Activated T-helper 2 cell treated with anti-CD3 and anti-CD28 coated beads, Interferon-gamma antibody, Interleukin-2, Interleukin-4, amounts not matched to agents 10 μg/mL and 5 μg/mL and 100 μg/mL, durations not matched to agents 14 hours and 24 hours and 36 hours (primary cell): ENCODE measurements at regions of chr13 and their contacts with region 1.

Region 1: DNA sequence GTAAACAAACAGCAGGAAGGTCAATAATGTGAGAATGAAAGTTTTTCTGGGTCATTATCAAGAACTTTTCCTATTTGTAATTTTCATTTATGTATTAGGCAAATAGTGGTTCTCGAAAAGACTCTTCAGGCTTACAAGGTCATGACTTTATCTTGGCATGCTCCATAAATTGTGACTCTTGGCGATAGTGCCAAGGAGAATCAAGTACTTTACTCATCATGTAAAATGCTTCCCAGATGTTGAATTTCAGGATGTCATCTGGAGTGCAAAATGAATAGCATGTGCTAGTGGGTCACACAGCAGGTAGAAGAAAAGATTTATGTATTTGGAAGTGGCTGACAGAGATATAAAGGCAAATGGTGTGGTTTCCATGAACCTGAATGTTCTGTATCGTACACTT is 1492.7 kb upstream of the PCDH20 start:
- DNase-seq: no peak
- H3K4me3 Mint-ChIP-seq: no peak overlapping the region
- H3K27ac Mint-ChIP-seq: no peak overlapping the region
- H3K4me1 Mint-ChIP-seq: no peaks in the 10 kb centered on the region
- H3K27me3 Mint-ChIP-seq: no peaks in the 10 kb centered on the region

Region 2: GRCh38 chr13:62502588-62502987 is 405.7 kb before region 1 on chr13:
- intact Hi-C with region 1: no loop called
- DNase-seq: no peak
- H3K4me3 Mint-ChIP-seq: no peak overlapping the region
- H3K27ac Mint-ChIP-seq: no peak overlapping the region
- H3K4me1 Mint-ChIP-seq: no peaks in the 10 kb centered on the region
- H3K27me3 Mint-ChIP-seq: no peaks in the 10 kb centered on the region

Region 3: DNA sequence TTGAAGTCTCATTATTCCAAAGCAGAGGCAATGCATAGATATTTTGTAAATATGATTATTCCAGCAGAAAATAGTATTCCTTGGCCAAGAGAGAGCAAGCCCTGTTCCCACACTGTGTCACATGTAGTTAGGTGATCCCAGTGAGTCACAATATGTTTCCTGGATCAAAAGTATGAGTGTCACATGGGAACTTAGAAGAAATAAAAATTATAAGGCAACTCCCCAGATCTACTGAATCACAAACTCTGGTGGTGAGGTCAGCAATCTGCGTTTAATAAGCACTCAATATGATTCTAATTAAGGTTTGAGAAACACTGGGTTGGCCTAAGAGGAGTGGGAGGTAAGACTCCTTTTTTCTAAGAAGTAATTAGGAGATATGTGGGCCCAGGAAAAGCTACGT is 11.8 kb after region 1 on chr13:
- intact Hi-C with region 1: no loop called
- DNase-seq: no peak
- H3K4me3 Mint-ChIP-seq: no peak overlapping the region
- H3K27ac Mint-ChIP-seq: no peak overlapping the region
- H3K4me1 Mint-ChIP-seq: no peaks in the 10 kb centered on the region
- H3K27me3 Mint-ChIP-seq: no peaks in the 10 kb centered on the region

Region 4: GRCh38 chr13:62960723-62961122 is 52.4 kb after region 1 on chr13:
- intact Hi-C with region 1: loop called (anchors 10 kb)
- DNase-seq: no peak
- H3K4me3 Mint-ChIP-seq: no peak overlapping the region
- H3K27ac Mint-ChIP-seq: no peak overlapping the region
- H3K4me1 Mint-ChIP-seq: no peaks in the 10 kb centered on the region
- H3K27me3 Mint-ChIP-seq: no peaks in the 10 kb centered on the region

Region 5: DNA sequence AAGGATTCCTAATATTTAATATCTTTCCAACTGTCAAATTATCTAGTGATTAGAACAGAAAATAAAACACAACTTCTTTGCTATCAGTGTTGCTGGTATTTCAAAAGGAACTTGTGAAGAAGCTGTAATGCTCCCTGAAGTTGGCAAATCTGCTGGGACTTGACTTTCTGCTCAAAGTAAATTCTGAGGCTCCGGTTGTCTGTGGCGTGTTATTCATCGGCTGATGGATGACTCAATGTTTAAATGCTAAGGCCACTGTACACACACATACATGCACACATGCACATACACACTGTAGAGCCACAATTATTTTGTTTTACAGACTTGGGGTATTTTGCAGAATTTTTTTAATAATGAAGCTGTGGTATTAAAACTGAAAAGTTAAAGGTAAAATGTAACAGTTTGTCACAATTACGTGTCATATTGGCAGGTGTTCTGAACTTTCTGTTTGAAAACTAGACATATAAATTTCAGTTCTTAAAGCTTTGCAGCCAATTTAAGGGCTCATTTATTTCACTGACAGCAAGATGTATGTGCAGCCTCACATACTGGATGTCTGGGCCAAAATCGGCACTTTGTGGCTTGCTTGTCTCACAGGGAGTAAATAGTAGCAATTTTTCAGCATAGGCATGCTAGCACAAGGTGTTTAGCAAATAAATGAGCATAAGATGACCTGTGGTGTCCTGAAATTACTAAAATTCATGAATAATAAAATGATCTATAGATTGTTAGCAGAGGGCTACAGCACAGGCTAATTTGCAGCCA is 199.0 kb after region 1 on chr13:
- intact Hi-C with region 1: no loop called
- DNase-seq: no peak
- H3K4me3 Mint-ChIP-seq: no peak overlapping the region
- H3K27ac Mint-ChIP-seq: no peak overlapping the region
- H3K4me1 Mint-ChIP-seq: no peaks in the 10 kb centered on the region
- H3K27me3 Mint-ChIP-seq: no peaks in the 10 kb centered on the region

Region 6: DNA sequence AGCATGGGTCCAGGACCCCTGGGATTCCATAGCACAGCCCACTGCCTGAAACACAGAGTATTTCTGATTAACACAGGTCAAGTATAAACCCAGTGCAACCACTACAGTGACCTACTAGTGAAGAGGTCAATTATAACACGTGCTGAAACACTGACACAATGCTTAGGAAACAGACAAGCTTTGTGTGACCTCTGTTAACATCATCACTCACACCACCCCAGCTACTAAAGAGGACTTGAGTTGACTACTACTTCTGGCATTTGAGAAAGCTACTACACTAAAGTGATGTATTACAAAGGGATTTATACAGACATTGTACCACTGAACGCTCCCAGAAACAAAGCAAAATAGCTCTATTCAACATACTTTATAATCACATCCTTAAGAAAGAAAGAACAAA is 443.2 kb after region 1 on chr13:
- intact Hi-C with region 1: no loop called
- DNase-seq: no peak
- H3K4me3 Mint-ChIP-seq: no peak overlapping the region
- H3K27ac Mint-ChIP-seq: no peak overlapping the region
- H3K4me1 Mint-ChIP-seq: no peaks in the 10 kb centered on the region
- H3K27me3 Mint-ChIP-seq: no peaks in the 10 kb centered on the region